Mammary epithelial cell (primary cell): ENCODE measurements at regions of chr18 and their contacts with region 1.

Region 1: DNA sequence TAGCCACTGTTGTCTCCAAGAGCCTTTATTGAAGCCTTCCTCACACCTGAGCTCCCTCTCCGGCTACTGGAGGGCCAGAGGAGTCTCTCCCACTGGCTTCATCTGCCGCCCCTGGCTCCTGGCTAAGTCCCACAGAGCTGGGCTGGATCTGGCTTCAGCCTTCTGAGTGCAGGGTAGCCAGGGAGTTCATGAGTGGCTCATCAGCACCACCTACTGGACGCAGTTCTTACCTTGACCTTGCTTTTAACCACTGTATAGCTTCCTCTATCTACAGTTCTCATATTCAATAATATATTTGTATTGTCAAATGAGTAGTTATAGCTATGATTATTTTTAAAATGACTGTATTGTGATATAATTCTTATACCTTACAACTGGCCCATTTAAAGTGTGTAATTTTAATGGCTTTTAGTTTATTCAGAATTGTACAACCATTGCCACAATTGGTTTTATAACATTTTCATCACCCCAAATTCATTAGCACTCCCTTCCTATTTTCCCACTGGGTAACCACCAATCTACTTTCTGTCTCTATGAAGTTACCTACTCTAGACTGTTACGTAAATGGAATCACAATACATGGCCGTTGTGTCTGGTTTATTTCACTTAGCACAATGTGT is 17.7 kb downstream of the CNDP1 start:
- DNase-seq: peak; percentile 58
- H3K4me3 ChIP-seq: no peak overlapping the region
- H3K27ac ChIP-seq: no peak overlapping the region
- H3K4me1 ChIP-seq: no peaks in the 10 kb centered on the region
- H3K27me3 ChIP-seq: no peaks in the 10 kb centered on the region
- CTCF ChIP-seq: peak; percentile 70 to 87

Region 2: GRCh38 chr18:74040459-74041332 is 511.4 kb before region 1 on chr18:
- CTCF ChIA-PET with region 1: no interaction called
- dilution Hi-C with region 1: no loop called
- in situ Hi-C with region 1: no loop called
- intact Hi-C with region 1: loop called (anchors 1 kb)
- DNase-seq: no peak
- H3K4me3 ChIP-seq: no peak overlapping the region
- H3K27ac ChIP-seq: no peak overlapping the region
- H3K4me1 ChIP-seq: no peaks in the 10 kb centered on the region
- H3K27me3 ChIP-seq: peaks cover 2% of the 10 kb centered on the region
- CTCF ChIP-seq: peak; percentile 75 to 82

Region 3: GRCh38 chr18:74353169-74353775 is 198.8 kb before region 1 on chr18:
- CTCF ChIA-PET with region 1: interaction called, 6 read pairs
- dilution Hi-C with region 1: no loop called
- in situ Hi-C with region 1: loop called (anchors 5 to 10 kb)
- intact Hi-C with region 1: loop called (anchors 1 kb)
- DNase-seq: peak; percentile 51
- H3K4me3 ChIP-seq: no peak overlapping the region
- H3K27ac ChIP-seq: no peak overlapping the region
- H3K4me1 ChIP-seq: peaks cover 8% of the 10 kb centered on the region
- H3K27me3 ChIP-seq: peaks cover 4% of the 10 kb centered on the region
- CTCF ChIP-seq: peak; percentile 72 to 85